ENCODE measurements at regions of chr15 and their contacts with region 1.

Region 1: GRCh38 chr15:67922971-67923945 is 83.4 kb upstream of the RNU6-1 start:
- DNase-seq: peak; percentile 30 to 49 (median 35)
- ATAC-seq: peak; percentile 61
- H3K4me3 ChIP-seq: no peak overlapping the region
- H3K27ac ChIP-seq: peak overlapping the region; percentile 32
- H3K4me1 ChIP-seq: peaks cover 0 to 39% of the 10 kb centered on the region in 2 experiments; a peak in 4 of 5 replicates
- H3K27me3 ChIP-seq: no peaks in the 10 kb centered on the region
- CTCF ChIP-seq: no peak
- EP300 ChIP-seq: no peak
- POLR2A ChIP-seq: no peak
- RAD21 ChIP-seq: no peak

Region 2: GRCh38 chr15:67884514-67885487 is 38.5 kb before region 1 on chr15:
- CTCF ChIA-PET with region 1: no interaction called
- POLR2A ChIA-PET with region 1: no interaction called
- in situ Hi-C with region 1: no loop called
- intact Hi-C with region 1: loop called (anchors 5 kb)
- DNase-seq: peak; percentile 94 to 96 (median 96)
- ATAC-seq: peak; percentile 85
- H3K4me3 ChIP-seq: peak overlapping the region; percentile 41
- H3K27ac ChIP-seq: peak overlapping the region; percentile 84
- H3K4me1 ChIP-seq: peaks cover 37 to 54% of the 10 kb centered on the region in 2 experiments
- H3K27me3 ChIP-seq: no peaks in the 10 kb centered on the region
- CTCF ChIP-seq: no peak
- EP300 ChIP-seq: peak; percentile 69
- POLR2A ChIP-seq: peak; percentile 65
- RAD21 ChIP-seq: peak; percentile 16 to 25; a peak in 2 of 4 replicates

Region 3: GRCh38 chr15:67900621-67901147 is 22.6 kb before region 1 on chr15:
- CTCF ChIA-PET with region 1: no interaction called
- POLR2A ChIA-PET with region 1: no interaction called
- in situ Hi-C with region 1: no loop called
- intact Hi-C with region 1: no loop called
- DNase-seq: peak in 1 of 4 experiments; percentile 37
- ATAC-seq: peak; percentile 60
- H3K4me3 ChIP-seq: no peak overlapping the region
- H3K27ac ChIP-seq: no peak overlapping the region; the same call in 2 of the 3 replicates
- H3K4me1 ChIP-seq: peaks cover 0 to 14% of the 10 kb centered on the region in 2 experiments; a peak in 3 of 5 replicates
- H3K27me3 ChIP-seq: no peaks in the 10 kb centered on the region
- CTCF ChIP-seq: no peak
- EP300 ChIP-seq: peak; percentile 42; the same call in 1 of the 2 replicates
- POLR2A ChIP-seq: no peak
- RAD21 ChIP-seq: 0 out of 4 replicates have a peak, but pooled peaks of 1 of the 2 experiments have one; percentile 2

Region 4: DNA sequence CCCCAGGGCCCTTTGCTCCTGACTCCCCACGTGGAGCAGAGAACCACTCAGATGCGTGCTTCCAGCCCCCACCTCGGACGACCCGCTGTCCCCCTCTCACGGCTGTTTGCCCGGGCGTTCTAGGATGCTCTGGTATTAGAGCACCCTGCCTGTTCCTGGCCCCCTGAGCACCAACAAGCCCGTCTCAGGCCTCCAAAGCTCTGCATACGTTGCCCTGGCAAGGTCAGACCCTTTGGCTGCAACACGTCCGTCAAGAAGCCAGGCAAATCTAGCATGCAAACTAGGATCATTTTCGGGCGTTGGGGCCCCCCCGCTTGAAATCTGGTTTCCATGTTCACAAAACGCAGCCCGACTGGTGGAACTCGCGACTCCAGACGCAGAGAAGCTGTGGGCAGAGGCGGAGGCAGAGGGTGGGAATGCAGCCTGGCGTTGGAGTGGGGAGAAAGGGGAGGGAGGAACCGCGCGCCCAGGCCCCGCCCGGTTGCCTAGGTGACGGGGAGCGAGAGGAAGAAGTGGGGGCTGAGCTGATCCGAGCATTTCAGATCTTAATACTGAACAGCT is 44.7 kb after region 1 on chr15:
- CTCF ChIA-PET with region 1: no interaction called
- POLR2A ChIA-PET with region 1: no interaction called
- in situ Hi-C with region 1: no loop called
- intact Hi-C with region 1: no loop called
- DNase-seq: peak; percentile 59 to 74 (median 68)
- ATAC-seq: peak; percentile 91
- H3K4me3 ChIP-seq: peak overlapping the region; percentile 30
- H3K27ac ChIP-seq: no peak overlapping the region
- H3K4me1 ChIP-seq: peaks cover 7 to 8% of the 10 kb centered on the region in 2 experiments; a peak in 3 of 5 replicates
- H3K27me3 ChIP-seq: no peaks in the 10 kb centered on the region; a peak in 1 of 5 replicates
- CTCF ChIP-seq: no peak
- EP300 ChIP-seq: no peak
- POLR2A ChIP-seq: no peak
- RAD21 ChIP-seq: no peak

Region 5: DNA sequence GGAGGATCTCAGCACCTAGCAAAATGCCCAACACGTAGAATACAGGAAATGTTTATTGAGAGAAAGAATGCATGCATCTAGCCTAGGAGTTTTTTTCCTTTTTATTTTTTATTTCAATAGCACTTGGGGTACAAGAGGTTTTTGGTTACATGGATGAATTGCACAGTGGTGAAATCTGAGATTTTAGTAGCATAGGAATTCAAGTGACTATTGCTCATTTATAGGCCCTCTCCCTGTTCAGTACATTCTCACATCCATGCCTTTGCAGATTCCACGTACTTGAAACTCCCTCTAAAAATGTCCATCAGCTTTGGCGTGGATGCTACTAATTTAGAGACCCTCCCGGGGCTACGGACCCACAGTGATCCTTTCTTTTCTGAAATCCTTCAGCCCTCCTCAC is 69.2 kb after region 1 on chr15:
- CTCF ChIA-PET with region 1: no interaction called
- POLR2A ChIA-PET with region 1: no interaction called
- in situ Hi-C with region 1: no loop called
- intact Hi-C with region 1: no loop called
- DNase-seq: no peak
- ATAC-seq: no peak
- H3K4me3 ChIP-seq: no peak overlapping the region
- H3K27ac ChIP-seq: no peak overlapping the region
- H3K4me1 ChIP-seq: peaks cover 0 to 6% of the 10 kb centered on the region in 2 experiments; a peak in 3 of 5 replicates
- H3K27me3 ChIP-seq: peaks cover 10 to 17% of the 10 kb centered on the region in 2 experiments; a peak in 3 of 5 replicates
- CTCF ChIP-seq: no peak
- EP300 ChIP-seq: no peak
- POLR2A ChIP-seq: no peak
- RAD21 ChIP-seq: no peak

Measured in K562 (cell line).